Activated CD4-positive, alpha-beta memory T cell treated with anti-CD3 and anti-CD28 coated beads for 36 hours (primary cell): ENCODE measurements at regions of chr9 and their contacts with region 1.

Region 1: GRCh38 chr9:126939821-126940221 is 25.2 kb downstream of the RALGPS1 start:
- DNase-seq: no peak
- H3K4me3 Mint-ChIP-seq: no peak overlapping the region
- H3K27ac Mint-ChIP-seq: no peak overlapping the region
- H3K4me1 Mint-ChIP-seq: peaks cover 5% of the 10 kb centered on the region
- H3K27me3 Mint-ChIP-seq: no peaks in the 10 kb centered on the region

Region 2: GRCh38 chr9:126745574-126746411 is 194.0 kb before region 1 on chr9:
- CTCF ChIA-PET with region 1: no interaction called
- POLR2A ChIA-PET with region 1: no interaction called
- intact Hi-C with region 1: no loop called
- DNase-seq: peak; percentile 30
- H3K4me3 Mint-ChIP-seq: no peak overlapping the region
- H3K27ac Mint-ChIP-seq: no peak overlapping the region
- H3K4me1 Mint-ChIP-seq: peaks cover 25% of the 10 kb centered on the region
- H3K27me3 Mint-ChIP-seq: peaks cover 2% of the 10 kb centered on the region

Region 3: DNA sequence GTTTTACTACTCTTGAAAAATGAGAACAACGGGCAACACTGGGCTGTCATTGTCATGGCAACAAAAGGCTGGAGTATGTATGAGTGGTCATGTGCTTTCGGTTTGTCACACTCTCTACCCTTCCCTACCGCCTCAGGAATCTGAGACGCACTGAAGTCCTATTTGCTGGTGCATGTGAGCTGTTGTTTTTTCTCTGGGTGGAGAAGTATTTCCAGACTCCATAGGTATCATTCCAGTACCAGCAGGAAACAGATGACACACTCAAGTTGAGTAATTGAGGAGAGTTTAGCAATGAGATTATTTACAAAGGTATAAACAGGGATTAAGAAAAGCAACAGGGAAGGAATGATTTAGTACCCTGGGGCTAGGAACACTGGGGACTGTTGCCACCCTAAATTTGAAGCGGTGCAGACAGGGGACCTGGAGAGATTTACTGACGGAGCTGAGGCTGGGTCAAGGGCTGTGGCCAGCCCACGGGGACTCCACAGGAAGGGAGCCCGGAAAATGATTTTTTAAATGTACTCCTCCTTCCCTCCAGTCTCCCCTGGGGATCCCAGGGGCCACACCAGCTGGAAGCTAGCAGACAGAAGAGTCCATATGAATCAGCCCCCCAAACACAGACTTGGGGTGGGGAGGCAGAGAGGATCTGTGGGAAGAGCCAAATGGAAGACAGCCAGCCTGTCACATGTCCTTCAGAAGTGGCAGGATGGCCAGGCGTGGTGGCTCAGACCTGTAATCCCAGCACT is 148.2 kb before region 1 on chr9:
- CTCF ChIA-PET with region 1: no interaction called
- POLR2A ChIA-PET with region 1: no interaction called
- intact Hi-C with region 1: no loop called
- DNase-seq: no peak
- H3K4me3 Mint-ChIP-seq: no peak overlapping the region
- H3K27ac Mint-ChIP-seq: no peak overlapping the region
- H3K4me1 Mint-ChIP-seq: peaks cover 4% of the 10 kb centered on the region
- H3K27me3 Mint-ChIP-seq: peaks cover 34% of the 10 kb centered on the region

Region 4: GRCh38 chr9:126965541-126966428 is 26.0 kb after region 1 on chr9:
- CTCF ChIA-PET with region 1: interaction called, 7 read pairs
- POLR2A ChIA-PET with region 1: no interaction called
- intact Hi-C with region 1: loop called (anchors 1 kb)
- DNase-seq: peak; percentile 65
- H3K4me3 Mint-ChIP-seq: no peak overlapping the region
- H3K27ac Mint-ChIP-seq: no peak overlapping the region
- H3K4me1 Mint-ChIP-seq: no peaks in the 10 kb centered on the region
- H3K27me3 Mint-ChIP-seq: peaks cover 4% of the 10 kb centered on the region

Region 5: GRCh38 chr9:127199001-127199791 is 259.4 kb after region 1 on chr9:
- CTCF ChIA-PET with region 1: interaction called, 148 read pairs
- POLR2A ChIA-PET with region 1: no interaction called
- intact Hi-C with region 1: loop called (anchors 1 kb)
- DNase-seq: peak; percentile 86
- H3K4me3 Mint-ChIP-seq: no peak overlapping the region
- H3K27ac Mint-ChIP-seq: peak overlapping the region; percentile 8
- H3K4me1 Mint-ChIP-seq: peaks cover 7% of the 10 kb centered on the region
- H3K27me3 Mint-ChIP-seq: no peaks in the 10 kb centered on the region

Region 6: DNA sequence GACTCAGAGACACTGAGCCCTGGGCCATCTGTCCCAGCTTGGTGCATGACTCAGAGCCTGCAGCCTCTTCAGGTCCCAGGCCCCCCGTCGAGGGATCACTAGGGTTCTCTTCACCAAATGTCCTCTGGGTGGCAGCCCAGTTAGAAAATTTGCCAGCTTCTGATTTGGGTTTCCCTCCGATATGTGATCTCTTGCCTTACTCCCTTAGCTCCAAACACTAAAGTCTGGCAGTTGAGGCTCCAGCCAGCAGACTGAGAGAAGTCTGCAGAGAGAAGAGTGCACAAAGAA is 265.3 kb after region 1 on chr9:
- CTCF ChIA-PET with region 1: interaction called, 148 read pairs
- POLR2A ChIA-PET with region 1: no interaction called
- intact Hi-C with region 1: no loop called
- DNase-seq: no peak
- H3K4me3 Mint-ChIP-seq: no peak overlapping the region
- H3K27ac Mint-ChIP-seq: no peak overlapping the region
- H3K4me1 Mint-ChIP-seq: no peaks in the 10 kb centered on the region
- H3K27me3 Mint-ChIP-seq: no peaks in the 10 kb centered on the region